Dendritic cell treated with granulocyte-macrophage colony-stimulating factor and Interleukin-4, amounts not matched to agents 40 ng/mL and 50 ng/mL, for 4 days (primary cell): ENCODE measurements at regions of chr10 and their contacts with region 1.

Region 1: GRCh38 chr10:133257489-133258065 is 19.1 kb downstream of the ADAM8 start:
- H3K4me3 Mint-ChIP-seq: peak overlapping the region; percentile 69
- H3K27ac Mint-ChIP-seq: peak overlapping the region; percentile 100
- H3K4me1 Mint-ChIP-seq: peaks cover 75% of the 10 kb centered on the region
- H3K27me3 Mint-ChIP-seq: peaks cover 3% of the 10 kb centered on the region

Region 2: DNA sequence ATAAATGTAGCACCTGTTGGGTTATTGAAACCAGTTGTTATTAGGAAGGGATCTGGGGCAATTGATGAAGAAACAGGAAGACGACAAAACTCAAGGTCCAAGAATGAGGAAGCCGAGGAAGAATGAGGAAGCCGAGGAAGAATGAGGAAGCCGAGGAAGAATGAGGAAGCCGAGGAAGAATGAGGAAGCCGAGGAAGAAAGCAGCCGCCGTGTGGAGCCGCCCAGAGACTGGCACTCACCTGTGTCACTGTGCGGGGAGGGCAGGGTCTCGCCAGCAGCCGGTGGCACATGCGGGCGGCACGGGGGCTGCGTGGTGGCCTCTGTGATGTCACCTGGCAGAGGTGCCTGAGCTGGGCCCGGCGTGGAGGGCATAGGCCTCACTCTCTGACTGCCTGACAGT is 244.1 kb before region 1 on chr10:
- intact Hi-C with region 1: loop called (anchors 5 kb)
- H3K4me3 Mint-ChIP-seq: peak overlapping the region; percentile 21
- H3K27ac Mint-ChIP-seq: no peak overlapping the region
- H3K4me1 Mint-ChIP-seq: peaks cover 6% of the 10 kb centered on the region
- H3K27me3 Mint-ChIP-seq: no peaks in the 10 kb centered on the region

Region 3: DNA sequence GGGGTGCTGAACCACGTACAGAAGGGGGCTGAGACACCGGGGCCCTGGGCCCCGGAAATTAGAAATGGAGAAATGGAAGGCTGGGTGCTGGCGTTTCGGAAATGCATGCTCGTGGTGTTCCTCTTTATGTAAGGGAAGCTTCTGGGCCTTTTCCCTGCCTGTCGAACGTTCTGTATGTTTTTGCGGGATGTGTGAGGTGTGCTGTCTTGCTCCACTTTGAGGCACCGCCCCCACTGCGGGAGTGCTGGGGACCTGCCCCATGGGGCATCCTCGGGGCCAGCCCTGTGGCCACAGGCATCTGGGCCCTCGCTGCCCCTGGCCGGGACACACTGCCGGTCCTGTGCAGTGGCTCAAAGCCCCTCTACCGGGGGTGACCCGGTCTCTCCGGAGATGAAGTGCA is 21.6 kb before region 1 on chr10:
- intact Hi-C with region 1: loop called (anchors 2 kb)
- H3K4me3 Mint-ChIP-seq: peak overlapping the region; percentile 73
- H3K27ac Mint-ChIP-seq: peak overlapping the region; percentile 92
- H3K4me1 Mint-ChIP-seq: peaks cover 61% of the 10 kb centered on the region
- H3K27me3 Mint-ChIP-seq: peaks cover 60% of the 10 kb centered on the region

Region 4: GRCh38 chr10:133278577-133279265 is 21.1 kb after region 1 on chr10:
- intact Hi-C with region 1: loop called (anchors 2 kb)
- H3K4me3 Mint-ChIP-seq: peak overlapping the region; percentile 75
- H3K27ac Mint-ChIP-seq: peak overlapping the region; percentile 95
- H3K4me1 Mint-ChIP-seq: peaks cover 82% of the 10 kb centered on the region
- H3K27me3 Mint-ChIP-seq: no peaks in the 10 kb centered on the region

Region 5: DNA sequence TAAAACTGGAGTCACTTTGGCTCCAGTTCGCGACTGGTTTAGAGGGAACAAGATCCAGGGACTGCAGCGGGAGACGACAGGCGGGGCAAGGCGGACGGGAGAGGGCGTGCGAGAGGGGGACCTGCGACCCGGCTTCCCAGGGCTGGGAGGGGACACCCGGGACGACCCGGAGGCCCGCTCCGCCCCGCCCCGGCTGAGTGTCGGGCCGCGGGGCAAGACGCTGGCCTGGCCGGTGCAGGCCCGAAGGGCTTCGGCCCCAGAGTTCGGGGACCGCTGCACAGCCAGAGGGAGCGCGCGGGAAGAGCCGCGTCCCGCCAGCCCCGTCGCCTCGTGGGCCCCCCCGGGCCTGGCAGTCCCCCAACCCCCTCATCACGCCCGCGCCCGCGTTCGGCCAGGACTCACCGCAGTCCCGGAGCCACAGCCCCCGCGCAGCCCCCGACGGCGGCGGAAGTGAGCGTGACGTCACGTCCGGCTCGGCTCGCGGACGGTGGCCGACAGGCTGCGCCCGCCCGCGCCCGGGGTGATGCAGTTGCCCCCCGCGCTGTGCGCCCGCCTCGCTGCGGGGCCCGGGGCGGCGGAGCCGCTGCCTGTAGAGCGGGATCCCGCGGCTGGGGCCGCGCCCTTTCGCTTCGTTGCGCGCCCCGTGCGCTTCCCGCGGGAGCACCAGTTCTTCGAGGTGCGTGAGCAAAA is 51.0 kb after region 1 on chr10 and contains the starts of genes TUBGCP2 and ZNF511:
- intact Hi-C with region 1: loop called (anchors 1 kb)
- H3K4me3 Mint-ChIP-seq: peak within 1 kb of the TSS; percentile 96
- H3K27ac Mint-ChIP-seq: peak within 1 kb of the TSS; percentile 99
- H3K4me1 Mint-ChIP-seq: peaks cover 49% of the 10 kb centered on the region
- H3K27me3 Mint-ChIP-seq: no peaks in the 10 kb centered on the region